RWPE1 (cell line): ENCODE measurements at regions of chr2 and their contacts with region 1.

Region 1: DNA sequence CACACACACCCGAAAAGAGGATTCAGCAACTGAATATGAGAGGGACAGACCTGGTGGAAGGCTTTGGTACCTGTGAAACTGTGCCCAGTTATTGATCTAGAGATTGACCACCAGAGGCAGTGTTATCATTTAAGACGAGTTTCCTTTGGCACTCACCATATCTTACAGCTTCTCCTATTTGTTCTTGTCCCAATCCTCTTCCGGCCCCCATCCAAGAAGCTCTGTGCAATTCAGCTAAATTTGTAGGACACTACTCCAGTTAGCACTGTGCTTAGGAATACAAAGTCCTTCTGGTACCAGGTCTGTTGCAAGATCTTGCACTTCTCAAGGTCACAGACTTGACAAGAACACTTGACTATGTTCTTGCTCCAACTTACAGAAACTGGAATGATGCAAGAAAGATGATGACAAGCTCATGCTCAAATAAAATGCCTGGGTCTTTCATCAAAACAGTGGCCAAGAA is 177.7 kb downstream of the TMEM247 start:
- DNase-seq: peak; percentile 39
- H3K27ac ChIP-seq: no peak overlapping the region
- CTCF ChIP-seq: peak; percentile 48

Region 2: GRCh38 chr2:46887028-46887885 is 230.2 kb after region 1 on chr2:
- CTCF ChIA-PET with region 1: interaction called, 12 read pairs
- POLR2A ChIA-PET with region 1: no interaction called
- DNase-seq: no peak
- H3K27ac ChIP-seq: no peak overlapping the region
- CTCF ChIP-seq: no peak